Naive thymus-derived CD8-positive, alpha-beta T cell (primary cell): ENCODE measurements at regions of chr5 and their contacts with region 1.

Region 1: DNA sequence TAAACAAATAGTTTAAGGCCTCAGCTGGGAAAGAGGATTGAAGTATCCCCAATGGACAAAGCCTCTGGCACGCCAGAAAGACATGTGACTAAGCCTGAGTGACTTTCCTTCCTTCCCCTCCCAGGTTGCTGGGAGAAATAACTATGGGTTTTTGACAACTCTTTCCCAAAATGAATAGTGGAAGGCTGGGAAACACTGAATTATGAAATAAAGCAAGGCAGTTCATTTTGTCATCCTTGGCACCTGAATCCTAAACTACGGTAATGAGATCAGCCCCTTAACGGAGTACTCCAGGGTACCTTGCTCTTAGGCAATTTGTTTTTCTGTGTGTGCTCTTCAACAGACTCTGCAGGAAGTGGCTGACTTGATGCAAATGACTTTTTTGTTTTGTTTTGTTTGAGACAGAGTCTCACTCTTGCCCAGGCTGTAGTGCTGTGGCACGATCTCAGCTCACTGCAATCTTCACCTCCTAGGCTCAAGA is 75.2 kb downstream of the LMNB1 start:
- DNase-seq: peak in 4 of 10 donors; percentile 25 to 63 (median 48)
- ATAC-seq: peak; percentile 67 to 75
- H3K4me3 Mint-ChIP-seq: peak overlapping the region; percentile 80 to 92 (median 89)
- H3K27ac Mint-ChIP-seq: peak overlapping the region; percentile 95 to 100 (median 99)
- H3K4me1 Mint-ChIP-seq: peaks cover 33 to 71% (median 52%) of the 10 kb centered on the region in 4 donors
- H3K27me3 Mint-ChIP-seq: no peaks in the 10 kb centered on the region

Region 2: DNA sequence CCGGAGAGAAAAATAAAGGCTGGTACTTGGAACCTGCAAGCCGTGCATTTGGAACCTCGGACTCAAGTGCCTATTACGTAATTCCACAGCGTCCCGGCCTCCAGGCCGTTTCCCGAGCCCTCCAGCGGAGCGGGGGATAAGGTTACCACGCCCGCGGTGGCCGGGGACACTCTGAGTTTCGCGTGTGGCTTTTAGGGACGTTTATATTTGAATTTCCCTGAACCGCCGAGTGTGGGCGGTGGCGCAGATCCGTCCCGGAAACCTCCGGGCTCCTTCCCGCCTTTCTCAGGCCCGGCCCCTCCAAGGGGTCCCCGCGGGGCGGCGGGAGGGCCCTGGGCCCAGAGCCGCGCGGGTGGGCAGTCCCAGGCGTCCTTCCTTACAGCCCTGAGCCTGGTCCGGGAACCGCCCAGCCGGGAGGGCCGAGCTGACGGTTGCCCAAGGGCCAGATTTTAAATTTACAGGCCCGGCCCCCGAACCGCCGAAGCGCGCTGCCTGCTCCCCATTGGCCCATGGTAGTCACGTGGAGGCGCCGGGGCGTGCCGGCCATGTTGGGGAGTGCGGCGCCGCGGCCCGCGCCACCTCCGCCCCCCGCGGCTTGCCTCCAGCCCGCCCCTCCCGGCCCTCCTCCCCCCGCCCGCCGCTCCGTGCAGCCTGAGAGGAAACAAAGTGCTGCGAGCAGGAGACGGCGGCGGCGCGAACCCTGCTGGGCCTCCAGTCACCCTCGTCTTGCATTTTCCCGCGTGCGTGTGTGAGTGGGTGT is 75.5 kb before region 1 on chr5 and contains the start of gene LMNB1:
- POLR2A ChIA-PET with region 1: interaction called, 72 read pairs
- DNase-seq: peak; percentile 87 to 98 (median 93)
- ATAC-seq: peak; percentile 75 to 78
- H3K4me3 Mint-ChIP-seq: peak within 1 kb of the TSS; percentile 90 to 100 (median 93)
- H3K27ac Mint-ChIP-seq: peak within 1 kb of the TSS; percentile 74 to 97 (median 94)
- H3K4me1 Mint-ChIP-seq: peaks cover 10 to 31% (median 28%) of the 10 kb centered on the region in 4 donors
- H3K27me3 Mint-ChIP-seq: no peaks in the 10 kb centered on the region
- polyA plus RNA-seq, gene LMNB1: 6.1 to 8.2 (median 7.9) TPM

Region 3: GRCh38 chr5:126801992-126802294 is 50.2 kb before region 1 on chr5:
- POLR2A ChIA-PET with region 1: no interaction called
- DNase-seq: peak in 3 of 10 donors; percentile 13 to 30 (median 15)
- ATAC-seq: no peak
- H3K4me3 Mint-ChIP-seq: no peak overlapping the region
- H3K27ac Mint-ChIP-seq: no peak overlapping the region
- H3K4me1 Mint-ChIP-seq: peaks cover 11 to 33% (median 21%) of the 10 kb centered on the region in 4 donors
- H3K27me3 Mint-ChIP-seq: no peaks in the 10 kb centered on the region

Region 4: GRCh38 chr5:126869005-126869451 is 16.9 kb after region 1 on chr5:
- POLR2A ChIA-PET with region 1: interaction called, 25 read pairs
- DNase-seq: peak in 4 of 10 donors; percentile 14 to 39 (median 31)
- ATAC-seq: peak; percentile 92 to 94
- H3K4me3 Mint-ChIP-seq: peak overlapping the region; percentile 75 to 90 (median 86)
- H3K27ac Mint-ChIP-seq: peak overlapping the region in 9 of 10 donors; percentile 1 to 87 (median 78)
- H3K4me1 Mint-ChIP-seq: peaks cover 10 to 14% (median 11%) of the 10 kb centered on the region in 4 donors
- H3K27me3 Mint-ChIP-seq: no peaks in the 10 kb centered on the region

Region 5: GRCh38 chr5:127030259-127031146 is 178.4 kb after region 1 on chr5 and contains the start of gene MARCHF3:
- POLR2A ChIA-PET with region 1: interaction called, 23 read pairs
- DNase-seq: peak; percentile 90 to 94 (median 92)
- ATAC-seq: peak; percentile 92 to 95
- H3K4me3 Mint-ChIP-seq: peak within 1 kb of the TSS; percentile 83 to 95 (median 92)
- H3K27ac Mint-ChIP-seq: peak within 1 kb of the TSS; percentile 74 to 92 (median 84)
- H3K4me1 Mint-ChIP-seq: peaks cover 9 to 27% (median 25%) of the 10 kb centered on the region in 4 donors
- H3K27me3 Mint-ChIP-seq: peaks cover 0 to 9% (median 2%) of the 10 kb centered on the region in 5 donors
- polyA plus RNA-seq, gene MARCHF3: 3.4 to 9.3 (median 6.8) TPM

Region 6: GRCh38 chr5:127111112-127111511 is 259.0 kb after region 1 on chr5:
- POLR2A ChIA-PET with region 1: no interaction called
- DNase-seq: no peak
- ATAC-seq: no peak
- H3K4me3 Mint-ChIP-seq: no peak overlapping the region
- H3K27ac Mint-ChIP-seq: no peak overlapping the region
- H3K4me1 Mint-ChIP-seq: peaks cover 0 to 2% (median 0%) of the 10 kb centered on the region in 4 donors
- H3K27me3 Mint-ChIP-seq: peaks cover 0 to 39% (median 20%) of the 10 kb centered on the region in 5 donors

Region 7: DNA sequence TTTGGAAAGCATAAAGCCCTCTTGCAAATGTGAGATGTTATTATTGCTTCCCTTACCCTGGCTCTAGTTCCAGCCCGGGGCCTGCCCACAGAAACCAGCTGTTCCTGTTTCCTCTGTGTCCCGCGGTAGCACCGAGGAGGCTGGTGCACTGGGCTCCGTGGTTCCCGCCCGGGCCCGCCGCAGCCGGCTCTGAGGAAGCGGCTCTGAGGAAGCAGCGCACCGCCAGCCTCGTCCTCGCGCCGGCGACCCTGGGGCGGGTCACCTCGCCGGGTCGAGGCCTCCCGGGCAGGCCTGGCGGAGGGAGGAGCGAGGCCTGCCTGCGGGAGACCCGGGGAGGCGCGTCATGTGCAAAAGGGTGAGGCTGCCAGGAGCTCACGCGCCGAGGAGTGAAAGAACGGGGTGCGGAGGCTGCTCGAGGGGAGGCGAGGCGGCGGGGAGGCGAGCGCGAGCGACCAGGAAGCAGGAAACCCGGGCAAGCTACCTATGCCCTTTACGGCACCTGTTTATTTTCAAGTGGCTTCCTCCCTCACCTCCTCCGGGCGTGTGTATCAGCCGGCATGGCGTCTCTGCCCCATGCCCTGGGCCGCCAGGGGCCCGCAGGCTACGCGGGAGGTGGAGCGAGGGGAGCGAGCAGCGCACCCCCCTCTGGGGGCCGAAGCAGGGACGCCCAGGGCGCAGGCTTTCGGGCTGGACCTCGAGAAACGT is 377.2 kb after region 1 on chr5:
- POLR2A ChIA-PET with region 1: interaction called, 28 read pairs
- DNase-seq: peak; percentile 21 to 70 (median 48)
- ATAC-seq: peak; percentile 84 to 87
- H3K4me3 Mint-ChIP-seq: peak overlapping the region; percentile 73 to 90 (median 78)
- H3K27ac Mint-ChIP-seq: peak overlapping the region; percentile 47 to 96 (median 90)
- H3K4me1 Mint-ChIP-seq: peaks cover 9 to 22% (median 19%) of the 10 kb centered on the region in 4 donors
- H3K27me3 Mint-ChIP-seq: no peaks in the 10 kb centered on the region